Cardiac septum (tissue), 1 donor: ENCODE measurements at regions of chr22 and their contacts with region 1.

Region 1: GRCh38 chr22:45096256-45096907 is 67.3 kb upstream of the NUP50 start:
- DNase-seq: no peak

Region 2: GRCh38 chr22:44931077-44931540 is 165.3 kb before region 1 on chr22:
- intact Hi-C with region 1: no loop called
- DNase-seq: peak; percentile 82

Region 3: GRCh38 chr22:44975427-44976262 is 120.7 kb before region 1 on chr22:
- intact Hi-C with region 1: loop called (anchors 5 kb)
- DNase-seq: peak; percentile 81